Mammary epithelial cell (primary cell): ENCODE measurements at regions of chr15 and their contacts with region 1.

Region 1: GRCh38 chr15:96330450-96331145 is at the start of gene NR2F2:
- DNase-seq: peak; percentile 96
- H3K4me3 ChIP-seq: peak within 1 kb of the TSS; percentile 76 to 96 (median 91)
- H3K27ac ChIP-seq: peak within 1 kb of the TSS; percentile 88
- H3K4me1 ChIP-seq: peaks cover 33% of the 10 kb centered on the region
- H3K27me3 ChIP-seq: no peaks in the 10 kb centered on the region
- CTCF ChIP-seq: no peak
- total RNA-seq, gene NR2F2: 3.2 to 34.1 TPM

Region 2: DNA sequence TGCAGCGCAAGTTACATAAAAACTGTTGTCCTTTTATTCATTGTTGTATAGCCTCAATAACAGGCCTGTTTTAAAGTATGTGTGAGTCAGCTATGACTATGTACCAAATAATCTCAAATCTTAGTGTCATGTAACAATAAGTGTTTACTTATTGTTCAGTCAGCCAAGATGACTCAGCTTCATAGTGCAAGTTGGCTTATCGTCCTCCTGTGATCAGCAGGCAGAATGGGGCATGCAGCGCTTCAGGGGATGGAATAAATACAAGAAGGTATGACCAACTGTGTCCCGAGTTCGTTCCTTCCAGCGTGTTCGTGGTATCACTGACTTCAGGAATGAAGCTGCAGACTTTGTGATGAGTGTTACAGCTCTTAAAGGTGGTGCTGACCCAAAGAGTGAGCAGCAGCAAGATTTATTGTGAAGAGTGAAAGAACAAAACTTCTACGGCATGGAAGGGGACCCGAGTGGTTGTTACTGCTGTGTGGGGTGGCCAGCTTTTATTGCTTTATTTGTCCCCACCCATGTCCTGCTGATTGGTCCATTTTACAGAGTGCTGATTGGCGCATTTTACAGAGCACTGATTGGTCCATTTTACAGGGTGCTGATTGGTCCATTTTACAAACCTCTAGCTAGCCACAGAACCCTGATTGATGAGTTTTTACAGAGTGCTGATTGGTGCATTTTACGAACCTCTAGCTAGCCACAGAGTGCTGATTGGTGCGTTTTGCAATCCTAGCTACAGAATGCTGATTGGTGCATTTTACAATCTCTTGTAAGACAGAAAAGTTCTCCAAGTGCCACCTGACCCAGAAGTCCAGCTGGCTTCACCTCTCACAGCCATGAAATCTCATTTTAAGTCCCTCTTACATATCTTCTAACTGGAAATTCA is 1083.3 kb before region 1 on chr15:
- CTCF ChIA-PET with region 1: no interaction called
- dilution Hi-C with region 1: no loop called
- in situ Hi-C with region 1: no loop called
- intact Hi-C with region 1: loop called (anchors 5 kb)
- DNase-seq: peak; percentile 99
- H3K4me3 ChIP-seq: no peak overlapping the region
- H3K27ac ChIP-seq: peak overlapping the region; percentile 50
- H3K4me1 ChIP-seq: peaks cover 20% of the 10 kb centered on the region
- H3K27me3 ChIP-seq: no peaks in the 10 kb centered on the region
- CTCF ChIP-seq: no peak

Region 3: GRCh38 chr15:95684693-95685115 is 645.9 kb before region 1 on chr15:
- CTCF ChIA-PET with region 1: no interaction called
- dilution Hi-C with region 1: no loop called
- in situ Hi-C with region 1: loop called in 1 of 2 experiments (anchors 25 kb)
- intact Hi-C with region 1: loop called (anchors 10 kb)
- DNase-seq: peak; percentile 87
- H3K4me3 ChIP-seq: no peak overlapping the region
- H3K27ac ChIP-seq: peak overlapping the region; percentile 88
- H3K4me1 ChIP-seq: peaks cover 10% of the 10 kb centered on the region
- H3K27me3 ChIP-seq: no peaks in the 10 kb centered on the region
- CTCF ChIP-seq: no peak

Region 4: GRCh38 chr15:96070626-96071025 is 260.0 kb before region 1 on chr15:
- CTCF ChIA-PET with region 1: no interaction called
- dilution Hi-C with region 1: no loop called
- in situ Hi-C with region 1: no loop called
- intact Hi-C with region 1: loop called (anchors 10 kb)
- DNase-seq: peak; percentile 9
- H3K4me3 ChIP-seq: no peak overlapping the region
- H3K27ac ChIP-seq: no peak overlapping the region
- H3K4me1 ChIP-seq: no peaks in the 10 kb centered on the region
- H3K27me3 ChIP-seq: no peaks in the 10 kb centered on the region
- CTCF ChIP-seq: no peak

Region 5: DNA sequence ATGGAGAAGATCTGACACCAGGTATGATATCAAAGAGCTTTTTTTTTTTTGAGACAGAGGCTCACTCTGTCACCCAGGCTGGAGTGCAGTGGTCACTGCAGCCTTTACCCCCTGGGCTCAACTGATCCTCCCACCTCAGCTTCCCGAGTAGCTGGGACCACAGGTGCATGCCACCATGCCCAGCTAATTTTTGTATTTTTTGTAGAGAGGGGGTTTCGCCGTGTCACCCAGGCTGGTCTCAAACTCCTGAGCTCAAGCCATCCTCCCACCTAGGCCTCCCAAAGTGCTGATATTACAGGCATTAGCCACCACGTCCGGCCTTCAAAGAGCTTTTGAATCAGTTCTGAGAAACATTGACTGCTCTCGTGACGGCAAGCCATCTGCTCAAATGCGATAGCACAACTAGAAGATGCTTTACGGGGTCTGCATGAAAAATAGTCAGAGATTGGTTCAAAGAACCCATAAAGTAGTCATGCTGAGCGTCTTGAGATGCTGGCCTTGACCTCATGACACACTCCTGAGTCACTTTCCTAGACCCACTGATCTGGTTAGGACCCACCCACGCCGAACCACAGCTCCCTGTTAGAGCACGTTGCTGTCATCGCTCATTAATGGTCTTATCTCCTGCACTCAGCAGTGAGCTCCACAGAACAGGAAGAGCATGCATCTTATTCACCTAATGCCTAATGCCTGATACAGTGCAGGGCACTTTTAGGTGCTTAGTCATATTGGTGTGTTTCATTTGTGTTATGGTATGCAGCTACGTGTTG is 57.1 kb before region 1 on chr15:
- CTCF ChIA-PET with region 1: interaction called, 6 read pairs
- dilution Hi-C with region 1: no loop called
- in situ Hi-C with region 1: loop called in 1 of 2 experiments (anchors 10 kb)
- intact Hi-C with region 1: loop called (anchors 1 kb)
- DNase-seq: peak; percentile 100
- H3K4me3 ChIP-seq: no peak overlapping the region
- H3K27ac ChIP-seq: peak overlapping the region; percentile 83
- H3K4me1 ChIP-seq: peaks cover 65% of the 10 kb centered on the region
- H3K27me3 ChIP-seq: no peaks in the 10 kb centered on the region
- CTCF ChIP-seq: no peak

Region 6: GRCh38 chr15:96356494-96357455 is 26.2 kb after region 1 on chr15:
- CTCF ChIA-PET with region 1: no interaction called
- dilution Hi-C with region 1: no loop called
- in situ Hi-C with region 1: no loop called
- intact Hi-C with region 1: loop called (anchors 2 kb)
- DNase-seq: peak; percentile 86
- H3K4me3 ChIP-seq: peak overlapping the region; percentile 61 to 78 (median 73)
- H3K27ac ChIP-seq: peak overlapping the region; percentile 66
- H3K4me1 ChIP-seq: peaks cover 23% of the 10 kb centered on the region
- H3K27me3 ChIP-seq: peaks cover 21% of the 10 kb centered on the region
- CTCF ChIP-seq: peak; percentile 66 to 89